Ascending aorta (tissue), 2 donors: ENCODE measurements at regions of chr1 and their contacts with region 1.

Region 1: DNA sequence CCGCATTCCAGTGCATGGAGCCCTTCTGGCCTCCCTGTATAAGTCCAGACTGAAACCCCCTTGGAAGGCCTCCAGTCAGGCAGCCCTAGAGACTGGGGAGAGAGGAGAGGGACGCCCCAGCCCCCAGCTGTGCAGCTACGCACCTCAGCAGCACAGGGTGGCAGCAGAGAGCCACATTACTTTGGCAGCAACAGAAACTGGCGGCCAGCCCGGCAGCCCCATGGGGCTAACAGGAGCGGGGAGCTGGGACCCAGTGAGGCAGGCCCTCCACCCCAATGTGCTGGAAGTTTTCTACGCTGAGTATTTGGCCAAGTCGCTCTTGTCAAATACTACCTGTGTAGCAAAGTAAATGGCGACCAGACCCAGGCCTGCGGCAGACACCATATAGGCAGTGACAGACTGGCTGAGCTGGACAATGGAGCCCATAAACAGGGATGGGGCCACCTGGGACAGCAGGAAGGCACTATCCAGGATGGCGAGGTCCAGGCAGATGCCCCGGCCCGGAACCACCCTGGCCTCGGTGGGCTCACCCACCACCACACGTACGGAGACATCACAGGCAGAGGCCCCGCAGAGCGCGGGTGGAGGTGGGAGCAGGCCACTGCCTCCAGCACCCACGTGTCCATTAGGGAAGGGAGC is 21.2 kb downstream of the SLC45A3 start:
- DNase-seq: peak in 1 of 2 donors; percentile 83
- H3K4me3 ChIP-seq: no peak overlapping the region
- H3K27ac ChIP-seq: no peak overlapping the region
- H3K4me1 ChIP-seq: peaks cover 2 to 4% of the 10 kb centered on the region in 2 donors
- H3K27me3 ChIP-seq: no peaks in the 10 kb centered on the region
- CTCF ChIP-seq: peak; percentile 82 to 92 (median 91)

Region 2: DNA sequence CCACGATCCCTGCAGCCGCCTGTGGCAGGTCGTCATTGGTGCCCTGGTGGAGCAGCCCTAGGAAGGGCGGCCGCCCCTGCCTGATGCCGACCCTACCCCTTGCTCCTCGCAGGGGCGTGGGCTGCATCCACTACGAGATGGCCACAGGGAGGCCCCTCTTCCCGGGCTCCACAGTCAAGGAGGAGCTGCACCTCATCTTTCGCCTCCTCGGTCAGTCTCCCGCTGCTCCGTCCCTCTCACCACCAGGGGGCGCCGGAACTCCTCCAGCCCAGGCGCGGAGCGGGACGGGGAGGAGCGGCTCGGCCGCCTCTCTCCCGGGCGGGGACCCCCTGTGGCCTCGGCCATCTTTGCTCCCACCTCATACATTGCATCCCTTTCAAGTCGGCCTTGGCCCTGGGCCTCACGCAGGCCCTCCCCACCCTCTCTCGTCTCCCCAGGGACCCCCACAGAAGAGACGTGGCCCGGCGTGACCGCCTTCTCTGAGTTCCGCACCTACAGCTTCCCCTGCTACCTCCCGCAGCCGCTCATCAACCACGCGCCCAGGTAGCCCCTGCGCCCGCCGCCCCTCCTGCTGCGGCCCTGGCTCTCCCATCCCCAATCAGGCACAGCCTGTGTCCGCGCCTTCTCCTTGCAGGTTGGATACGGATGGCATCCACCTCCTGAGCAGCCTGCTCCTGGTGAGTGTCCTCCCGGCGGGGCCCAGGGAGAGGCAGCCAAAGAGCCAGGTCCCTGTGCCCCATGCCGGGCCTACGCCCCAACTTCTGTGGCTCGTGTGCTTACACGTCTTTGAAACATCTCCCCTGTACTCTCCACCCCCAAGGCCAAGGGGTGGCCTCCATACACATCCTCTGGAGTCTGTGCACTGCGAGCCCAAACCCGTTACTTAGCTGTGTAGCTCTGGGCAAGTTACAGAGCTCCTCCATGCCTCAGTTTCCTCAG is 129.9 kb before region 1 on chr1:
- intact Hi-C with region 1: loop called (anchors 1 kb)
- DNase-seq: peak in 1 of 2 donors; percentile 86
- H3K4me3 ChIP-seq: peak overlapping the region; percentile 14 to 60
- H3K27ac ChIP-seq: no peak overlapping the region
- H3K4me1 ChIP-seq: peaks cover 2 to 3% of the 10 kb centered on the region in 2 donors
- H3K27me3 ChIP-seq: no peaks in the 10 kb centered on the region
- CTCF ChIP-seq: peak; percentile 83 to 96 (median 94)

Region 3: DNA sequence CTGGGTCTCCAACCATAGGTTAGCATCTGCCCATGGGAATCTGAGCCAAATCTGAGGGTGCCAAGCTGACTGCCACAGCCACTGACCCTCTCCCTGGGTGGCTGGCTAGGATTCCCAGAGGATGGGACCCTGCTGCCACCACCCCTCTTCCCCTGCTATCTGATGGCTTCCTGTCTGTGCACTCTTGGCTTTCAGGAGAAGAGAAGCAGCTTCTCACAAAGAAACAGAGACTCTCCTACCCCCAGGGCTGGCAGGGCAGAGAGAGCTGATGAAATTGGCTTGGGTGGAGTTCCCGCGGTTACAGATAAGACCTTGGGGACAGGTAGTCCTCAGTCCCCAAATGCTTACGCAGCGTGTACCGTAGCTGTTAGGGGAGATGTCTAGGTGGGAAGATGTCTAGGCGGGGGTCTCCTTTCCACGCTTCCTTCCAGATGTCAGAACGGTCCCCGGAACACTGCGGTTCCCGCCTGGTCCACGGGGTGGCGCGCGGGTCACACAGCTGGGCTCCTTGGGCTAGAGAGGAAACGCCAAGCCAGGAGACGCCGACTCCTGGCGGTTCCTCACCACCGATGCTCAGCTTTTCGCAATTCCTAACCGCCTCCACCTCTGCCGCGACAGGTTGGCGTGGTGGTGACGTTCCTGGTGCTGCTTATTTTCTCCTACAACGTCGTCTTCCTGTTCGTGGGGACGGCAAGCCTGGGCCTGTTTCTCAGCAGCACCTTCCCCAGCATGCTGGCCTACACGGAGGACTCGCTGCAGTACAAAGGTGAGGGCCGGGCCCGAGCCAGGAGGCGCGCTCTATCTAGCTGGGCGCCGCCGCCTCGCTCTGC is 67.3 kb before region 1 on chr1:
- intact Hi-C with region 1: loop called (anchors 1 kb)
- DNase-seq: peak; percentile 26 to 94
- H3K4me3 ChIP-seq: peak overlapping the region; percentile 40 to 62
- H3K27ac ChIP-seq: no peak overlapping the region
- H3K4me1 ChIP-seq: peaks cover 0 to 9% of the 10 kb centered on the region in 2 donors
- H3K27me3 ChIP-seq: no peaks in the 10 kb centered on the region
- CTCF ChIP-seq: peak; percentile 99 to 100 (median 99)

Region 4: GRCh38 chr1:205669341-205670149 is 10.5 kb after region 1 on chr1:
- intact Hi-C with region 1: no loop called
- DNase-seq: no peak
- H3K4me3 ChIP-seq: no peak overlapping the region
- H3K27ac ChIP-seq: no peak overlapping the region
- H3K4me1 ChIP-seq: peaks cover 0 to 8% of the 10 kb centered on the region in 2 donors
- H3K27me3 ChIP-seq: no peaks in the 10 kb centered on the region
- CTCF ChIP-seq: no peak

Region 5: GRCh38 chr1:205711104-205712020 is 52.3 kb after region 1 on chr1:
- intact Hi-C with region 1: loop called (anchors 1 kb)
- DNase-seq: peak in 1 of 2 donors; percentile 86
- H3K4me3 ChIP-seq: no peak overlapping the region
- H3K27ac ChIP-seq: peak overlapping the region in 1 of 2 donors; percentile 65
- H3K4me1 ChIP-seq: peaks cover 0 to 5% of the 10 kb centered on the region in 2 donors
- H3K27me3 ChIP-seq: no peaks in the 10 kb centered on the region
- CTCF ChIP-seq: peak; percentile 69 to 87 (median 85)

Region 6: DNA sequence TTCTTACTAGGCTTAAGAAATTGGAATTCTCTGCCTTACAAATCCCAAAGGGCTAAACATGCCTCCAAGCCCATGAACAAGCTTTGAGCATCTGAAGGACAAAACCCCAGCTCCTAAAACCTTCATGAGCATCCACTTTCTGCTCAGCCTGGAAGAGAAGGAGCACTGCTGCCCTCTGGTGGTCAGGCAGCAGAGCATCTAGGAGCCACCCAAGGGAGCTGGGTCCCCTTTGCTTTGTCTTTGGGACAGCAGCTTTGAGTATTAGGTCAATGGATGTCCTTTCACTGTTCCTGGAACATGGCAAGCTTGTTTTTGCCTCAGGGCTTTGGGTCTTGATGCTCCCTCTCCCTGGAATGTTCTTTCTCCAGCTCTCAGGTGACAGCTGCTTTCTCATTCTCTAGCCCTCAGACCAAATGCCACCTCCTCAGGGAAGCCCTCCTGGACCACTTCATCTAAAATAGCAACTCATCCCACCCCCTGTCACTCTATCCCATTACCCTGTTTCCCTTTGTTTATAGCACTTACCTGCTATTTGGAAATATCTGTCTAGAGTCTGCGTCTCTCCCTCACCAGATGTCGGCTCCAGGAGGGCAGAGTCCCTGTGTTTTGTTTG is 318.4 kb after region 1 on chr1:
- intact Hi-C with region 1: loop called (anchors 5 kb)
- DNase-seq: peak in 1 of 2 donors; percentile 75
- H3K4me3 ChIP-seq: no peak overlapping the region
- H3K27ac ChIP-seq: no peak overlapping the region
- H3K4me1 ChIP-seq: peaks cover 0 to 7% of the 10 kb centered on the region in 2 donors
- H3K27me3 ChIP-seq: no peaks in the 10 kb centered on the region
- CTCF ChIP-seq: peak; percentile 90 to 97 (median 93)